ENCODE measurements at regions of chr11 and their contacts with region 1.

Region 1: DNA sequence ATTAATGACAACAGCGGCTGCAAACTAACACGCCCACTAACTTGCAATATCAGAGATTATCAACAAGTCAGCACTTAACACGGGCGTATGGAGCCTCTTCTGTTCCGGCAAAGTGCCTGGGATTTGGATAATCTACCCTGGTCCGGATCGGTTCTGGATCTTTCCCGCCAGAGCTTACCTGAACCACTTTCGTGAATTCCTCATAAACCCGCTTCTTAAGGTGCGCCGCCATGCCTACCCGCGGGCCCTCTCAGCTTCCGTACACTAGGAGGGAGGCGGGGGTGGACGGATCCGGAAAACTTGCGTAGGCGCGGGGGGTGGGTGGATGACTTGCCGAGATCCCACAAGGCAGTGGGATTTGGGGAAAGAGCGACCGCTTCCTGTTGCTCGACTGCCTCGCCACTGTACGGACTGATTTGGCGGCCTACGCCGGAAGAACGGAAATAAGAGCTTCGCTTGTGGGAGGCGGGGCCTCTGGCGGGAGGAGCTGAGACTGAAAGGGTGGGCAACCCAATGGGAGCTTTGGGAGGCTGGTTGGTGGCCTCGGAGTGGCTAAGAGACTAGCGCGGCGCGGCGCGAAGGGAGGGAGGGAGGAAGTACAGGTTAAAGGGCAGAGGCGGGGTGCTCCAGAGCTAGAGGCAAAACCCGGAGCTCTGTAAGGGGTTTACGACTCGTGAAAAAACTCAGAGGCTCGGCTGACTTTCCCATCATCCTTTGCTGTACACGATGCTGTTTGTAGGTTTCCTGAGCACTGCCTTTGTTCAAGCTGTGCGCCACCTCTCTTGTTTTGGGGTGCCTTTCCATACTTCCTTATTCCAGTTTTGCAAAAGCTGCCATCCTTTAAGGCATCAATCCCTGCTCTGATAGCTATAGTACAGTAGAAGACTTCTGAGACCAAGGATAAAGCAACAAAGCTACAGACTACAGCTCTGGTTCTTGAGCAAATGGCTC is at the start of gene INTS4:
- DNase-seq: peak; percentile 98
- H3K4me3 Mint-ChIP-seq: peak within 1 kb of the TSS; percentile 86
- H3K27ac Mint-ChIP-seq: peak within 1 kb of the TSS; percentile 89
- H3K4me1 Mint-ChIP-seq: peaks cover 20% of the 10 kb centered on the region
- H3K27me3 Mint-ChIP-seq: no peaks in the 10 kb centered on the region
- CTCF ChIP-seq: no peak
- total RNA-seq, gene INTS4: 35.4 and 43.9 TPM in 2 replicates

Region 2: GRCh38 chr11:77705195-77705876 is 289.4 kb before region 1 on chr11:
- CTCF ChIA-PET with region 1: interaction called, 5 read pairs
- intact Hi-C with region 1: loop called (anchors 5 kb)
- DNase-seq: peak; percentile 79
- H3K4me3 Mint-ChIP-seq: peak overlapping the region; percentile 56
- H3K27ac Mint-ChIP-seq: peak overlapping the region; percentile 98
- H3K4me1 Mint-ChIP-seq: peaks cover 22% of the 10 kb centered on the region
- H3K27me3 Mint-ChIP-seq: no peaks in the 10 kb centered on the region
- CTCF ChIP-seq: no peak

Region 3: DNA sequence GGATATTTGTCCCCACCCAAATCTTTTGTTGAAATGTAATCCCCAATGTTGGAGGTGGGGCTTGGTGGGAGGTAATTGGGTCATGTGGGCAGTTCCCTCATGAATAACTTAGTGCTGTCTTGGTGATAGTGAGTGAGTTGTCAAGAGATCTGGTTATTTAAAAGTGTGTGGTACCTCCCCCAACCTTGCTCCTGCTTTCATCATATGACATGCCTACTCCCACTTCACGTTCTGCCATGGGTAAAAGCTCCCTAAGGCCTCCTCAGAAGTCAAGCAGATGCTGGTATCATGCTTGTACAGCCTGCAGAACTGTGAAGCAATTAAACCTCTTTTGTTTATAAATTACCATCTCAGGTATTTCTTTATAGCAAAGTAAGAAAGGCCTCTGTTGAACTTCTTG is 143.2 kb before region 1 on chr11:
- CTCF ChIA-PET with region 1: no interaction called
- intact Hi-C with region 1: no loop called
- DNase-seq: no peak
- H3K4me3 Mint-ChIP-seq: no peak overlapping the region
- H3K27ac Mint-ChIP-seq: no peak overlapping the region
- H3K4me1 Mint-ChIP-seq: no peaks in the 10 kb centered on the region
- H3K27me3 Mint-ChIP-seq: no peaks in the 10 kb centered on the region
- CTCF ChIP-seq: no peak

Region 4: DNA sequence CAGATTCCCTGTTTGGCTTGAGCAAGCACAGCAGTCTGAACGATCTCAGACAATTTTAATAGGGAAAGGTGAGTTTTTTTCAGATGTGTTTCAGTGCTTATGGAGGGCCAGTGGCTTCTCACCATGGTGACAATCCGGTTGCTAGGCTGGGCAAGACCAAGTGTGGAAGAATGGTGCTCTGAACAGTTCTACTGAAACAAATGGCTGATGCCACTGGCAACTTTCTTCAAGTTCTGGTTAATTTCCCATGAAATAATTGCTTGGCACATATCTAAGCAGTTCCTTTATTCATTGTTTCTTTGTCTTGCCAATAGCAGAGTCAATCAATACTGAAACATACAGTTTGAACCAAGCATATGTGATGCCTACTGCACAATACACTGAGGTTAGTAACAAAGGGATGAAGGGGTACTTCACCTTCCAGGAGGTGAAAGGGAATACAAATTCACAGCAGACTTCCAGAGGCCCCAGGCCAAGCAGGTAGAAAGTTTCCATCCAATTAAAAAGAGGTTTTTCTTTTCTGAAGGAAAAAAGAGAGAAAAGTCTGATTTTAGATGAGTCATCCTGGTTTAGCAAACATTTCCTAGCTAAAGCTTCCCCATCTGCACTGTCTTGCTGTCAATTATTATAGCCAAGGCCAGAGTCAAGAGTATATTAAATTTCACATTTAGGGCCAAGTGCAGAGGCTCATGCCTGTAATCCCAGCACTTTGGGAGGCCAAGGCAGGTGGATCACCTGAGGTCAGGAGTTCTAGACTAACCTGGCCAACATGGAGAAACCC is 106.2 kb after region 1 on chr11:
- CTCF ChIA-PET with region 1: no interaction called
- intact Hi-C with region 1: no loop called
- DNase-seq: no peak
- H3K4me3 Mint-ChIP-seq: no peak overlapping the region
- H3K27ac Mint-ChIP-seq: no peak overlapping the region
- H3K4me1 Mint-ChIP-seq: no peaks in the 10 kb centered on the region
- H3K27me3 Mint-ChIP-seq: no peaks in the 10 kb centered on the region
- CTCF ChIP-seq: no peak